Activated CD4-positive, alpha-beta T cell treated with anti-CD3 and anti-CD28 coated beads for 36 hours (primary cell): ENCODE measurements at regions of chr19 and their contacts with region 1.

Region 1: DNA sequence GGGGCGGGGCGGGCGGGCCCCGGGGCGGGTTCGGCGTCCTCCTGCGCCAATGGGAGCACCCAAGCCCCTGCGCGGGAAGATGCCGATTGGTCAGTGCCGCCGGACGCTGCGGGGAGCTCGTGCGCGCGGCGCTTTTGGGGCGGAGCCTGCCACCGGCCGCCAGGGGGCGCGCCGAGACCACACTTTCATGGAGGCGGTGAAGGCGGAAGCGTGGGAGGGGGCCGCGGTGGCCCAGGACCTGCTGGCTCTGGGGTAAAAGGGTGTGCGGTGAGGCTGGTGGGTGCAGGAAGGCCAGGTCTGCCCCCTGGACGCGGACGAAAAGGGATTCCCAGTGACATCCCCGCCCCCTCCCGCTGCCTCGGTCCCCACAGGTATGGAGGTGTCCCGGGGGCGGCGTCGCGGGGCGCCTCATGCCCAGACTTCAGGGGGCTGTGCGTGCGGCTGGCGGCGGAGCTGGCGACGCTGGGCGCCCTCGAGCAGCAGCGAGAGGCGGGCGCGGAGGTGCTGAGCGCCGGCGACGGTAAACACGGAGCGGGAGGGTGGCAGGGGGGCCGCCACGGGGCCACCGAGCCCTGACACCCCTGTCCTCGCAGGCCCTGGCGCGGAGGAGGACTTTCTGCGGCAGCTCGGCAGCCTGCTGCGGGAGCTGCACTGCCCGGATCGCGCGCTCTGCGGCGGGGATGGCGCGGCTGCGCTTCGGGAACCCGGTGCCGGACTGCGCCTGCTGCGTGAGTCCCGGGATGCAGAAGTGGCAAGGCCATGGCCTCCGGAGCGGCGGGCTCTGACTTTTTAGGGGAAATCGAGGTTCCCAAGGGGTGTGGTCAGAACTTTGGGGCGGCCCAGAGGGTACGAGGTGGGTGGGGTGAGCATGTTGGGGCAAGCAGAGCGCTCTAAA is at the start of gene FAM98C:
- DNase-seq: peak; percentile 99
- ATAC-seq: peak; percentile 99
- H3K4me3 Mint-ChIP-seq: peak within 1 kb of the TSS; percentile 84
- H3K27ac Mint-ChIP-seq: peak within 1 kb of the TSS; percentile 85
- H3K4me1 Mint-ChIP-seq: peaks cover 16% of the 10 kb centered on the region
- H3K27me3 Mint-ChIP-seq: no peaks in the 10 kb centered on the region
- total RNA-seq, gene FAM98C: 19.6 to 24.8 TPM

Region 2: GRCh38 chr19:38387550-38388348 is 15.5 kb before region 1 on chr19 and contains the start of gene GGN:
- CTCF ChIA-PET with region 1: interaction called, 30 read pairs
- POLR2A ChIA-PET with region 1: interaction called, 9 read pairs
- intact Hi-C with region 1: loop called in 1 of 2 experiments (anchors 1 kb)
- DNase-seq: peak; percentile 94
- ATAC-seq: peak; percentile 81
- H3K4me3 Mint-ChIP-seq: peak within 1 kb of the TSS; percentile 75
- H3K27ac Mint-ChIP-seq: peak within 1 kb of the TSS; percentile 76
- H3K4me1 Mint-ChIP-seq: peaks cover 26% of the 10 kb centered on the region
- H3K27me3 Mint-ChIP-seq: peaks cover 14% of the 10 kb centered on the region
- total RNA-seq, gene GGN: 0.30 to 0.51 TPM

Region 3: GRCh38 chr19:38441657-38442348 is 38.6 kb after region 1 on chr19:
- CTCF ChIA-PET with region 1: interaction called, 7 read pairs
- POLR2A ChIA-PET with region 1: no interaction called
- intact Hi-C with region 1: loop called in 1 of 2 experiments (anchors 1 kb)
- DNase-seq: peak; percentile 36
- ATAC-seq: peak; percentile 85
- H3K4me3 Mint-ChIP-seq: no peak overlapping the region
- H3K27ac Mint-ChIP-seq: no peak overlapping the region
- H3K4me1 Mint-ChIP-seq: peaks cover 4% of the 10 kb centered on the region
- H3K27me3 Mint-ChIP-seq: peaks cover 4% of the 10 kb centered on the region

Region 4: DNA sequence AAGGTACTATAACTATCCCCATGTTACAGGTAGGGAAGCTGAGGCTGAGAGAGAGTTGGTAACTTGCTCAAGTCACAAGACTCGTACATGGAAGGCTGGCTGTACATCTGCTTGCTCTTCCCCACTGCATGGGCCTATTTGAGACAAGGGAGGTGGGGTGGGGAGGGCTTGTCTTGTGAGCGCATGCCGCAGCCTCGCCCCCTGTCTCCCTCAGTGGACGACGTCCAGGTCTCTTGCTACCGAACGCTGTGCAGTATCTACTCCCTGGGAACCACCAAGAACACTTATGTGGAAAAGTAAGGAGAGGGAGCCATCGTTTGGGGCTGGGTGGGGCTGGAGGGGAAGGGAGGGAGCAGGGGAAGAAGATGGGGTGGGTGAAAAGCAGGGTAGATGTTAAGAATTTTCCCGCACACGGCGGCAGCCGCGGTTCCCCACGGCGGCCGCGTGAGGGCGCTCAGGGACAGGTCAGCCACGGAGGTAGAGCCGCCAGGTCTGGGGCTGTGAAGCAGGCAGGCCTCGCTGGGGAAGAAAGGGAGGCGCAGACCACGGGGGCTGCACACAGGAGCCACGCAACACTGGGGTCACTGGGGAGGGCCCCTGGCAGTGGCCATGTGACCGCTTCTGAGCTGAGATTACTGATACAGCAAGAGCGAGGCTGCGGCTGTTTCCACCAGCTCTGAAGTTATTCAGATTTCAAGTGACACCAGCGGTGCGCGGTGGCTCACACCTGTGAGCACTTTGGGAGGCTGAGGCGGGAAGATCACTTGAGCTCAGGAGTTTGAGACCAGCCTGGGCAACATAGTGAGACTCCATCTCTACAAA is 111.8 kb after region 1 on chr19:
- CTCF ChIA-PET with region 1: interaction called, 8 read pairs
- POLR2A ChIA-PET with region 1: no interaction called
- intact Hi-C with region 1: loop called in 1 of 2 experiments (anchors 1 kb)
- DNase-seq: peak; percentile 88
- ATAC-seq: peak; percentile 96
- H3K4me3 Mint-ChIP-seq: no peak overlapping the region
- H3K27ac Mint-ChIP-seq: peak overlapping the region; percentile 42
- H3K4me1 Mint-ChIP-seq: peaks cover 16% of the 10 kb centered on the region
- H3K27me3 Mint-ChIP-seq: no peaks in the 10 kb centered on the region

Region 5: GRCh38 chr19:38658462-38659306 is 255.5 kb after region 1 on chr19:
- CTCF ChIA-PET with region 1: no interaction called
- POLR2A ChIA-PET with region 1: no interaction called
- intact Hi-C with region 1: no loop called
- DNase-seq: no peak
- ATAC-seq: no peak
- H3K4me3 Mint-ChIP-seq: no peak overlapping the region
- H3K27ac Mint-ChIP-seq: no peak overlapping the region
- H3K4me1 Mint-ChIP-seq: peaks cover 69% of the 10 kb centered on the region
- H3K27me3 Mint-ChIP-seq: peaks cover 3% of the 10 kb centered on the region

Region 6: DNA sequence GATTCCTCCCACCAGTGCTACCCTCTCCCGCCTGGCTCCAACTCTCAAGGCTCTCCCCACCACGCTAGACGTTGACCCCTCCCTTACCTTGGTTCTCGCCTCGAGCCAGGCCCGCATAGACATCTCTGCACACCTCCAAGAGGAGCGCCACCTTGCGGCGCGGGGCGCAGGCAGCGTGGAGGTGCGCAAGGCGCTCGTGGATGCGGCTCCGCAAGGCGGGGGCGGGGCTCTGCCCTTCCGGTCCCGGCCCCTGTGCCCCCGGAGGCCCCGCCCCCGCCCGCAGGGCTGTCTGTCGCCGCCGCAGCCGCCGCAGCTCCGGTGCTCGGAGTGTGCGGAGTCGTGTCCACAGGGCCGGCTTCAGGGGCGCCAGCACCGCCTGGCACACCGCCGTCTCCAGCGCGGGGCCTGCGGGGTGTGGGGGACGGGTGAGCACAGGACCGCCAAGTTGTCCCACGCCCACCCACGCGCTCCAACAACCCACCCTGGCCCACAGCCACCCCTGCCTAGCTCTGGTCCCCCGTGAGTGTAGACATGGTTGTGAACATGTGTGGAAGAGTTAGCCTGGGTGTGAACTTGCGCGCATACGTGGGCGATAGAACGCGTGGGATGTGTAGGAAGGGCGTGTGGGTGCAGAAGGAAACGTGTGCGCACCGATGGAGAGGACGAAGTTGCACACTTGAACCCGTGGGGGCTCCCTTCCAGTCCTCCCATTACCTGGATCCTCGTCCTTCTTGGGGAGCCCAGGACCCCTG is 466.8 kb after region 1 on chr19:
- CTCF ChIA-PET with region 1: no interaction called
- POLR2A ChIA-PET with region 1: no interaction called
- intact Hi-C with region 1: loop called in 1 of 2 experiments (anchors 5 kb)
- DNase-seq: peak; percentile 94
- ATAC-seq: peak; percentile 85
- H3K4me3 Mint-ChIP-seq: peak overlapping the region; percentile 76
- H3K27ac Mint-ChIP-seq: peak overlapping the region; percentile 86
- H3K4me1 Mint-ChIP-seq: peaks cover 37% of the 10 kb centered on the region
- H3K27me3 Mint-ChIP-seq: no peaks in the 10 kb centered on the region